ENCODE measurements at regions of chr2 and their contacts with region 1.

Region 1: GRCh38 chr2:231482806-231483391 is 18.6 kb upstream of the NCL start:
- DNase-seq: peak; percentile 47 to 96 (median 74)

Region 2: DNA sequence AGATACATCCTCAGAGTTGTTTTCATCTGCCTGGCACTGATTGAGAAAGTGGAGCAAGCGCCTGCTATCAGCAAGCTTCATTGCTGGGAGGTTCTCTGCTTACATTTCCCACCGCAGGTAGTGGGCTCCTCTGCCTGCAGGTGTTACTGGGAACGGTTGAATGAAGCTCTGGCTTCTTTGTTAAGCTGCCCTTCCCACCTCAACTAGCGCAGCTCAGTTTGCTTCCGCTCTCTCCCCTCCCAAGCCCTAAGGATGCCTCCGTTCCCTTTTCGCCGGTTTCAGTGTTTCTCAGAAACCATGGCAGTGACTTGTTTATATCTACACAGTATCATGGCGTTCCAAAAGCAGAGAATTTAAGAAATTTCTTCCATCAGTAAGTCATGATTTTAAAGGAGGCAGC is 159.6 kb before region 1 on chr2:
- intact Hi-C with region 1: no loop called
- DNase-seq: no peak

Region 3: DNA sequence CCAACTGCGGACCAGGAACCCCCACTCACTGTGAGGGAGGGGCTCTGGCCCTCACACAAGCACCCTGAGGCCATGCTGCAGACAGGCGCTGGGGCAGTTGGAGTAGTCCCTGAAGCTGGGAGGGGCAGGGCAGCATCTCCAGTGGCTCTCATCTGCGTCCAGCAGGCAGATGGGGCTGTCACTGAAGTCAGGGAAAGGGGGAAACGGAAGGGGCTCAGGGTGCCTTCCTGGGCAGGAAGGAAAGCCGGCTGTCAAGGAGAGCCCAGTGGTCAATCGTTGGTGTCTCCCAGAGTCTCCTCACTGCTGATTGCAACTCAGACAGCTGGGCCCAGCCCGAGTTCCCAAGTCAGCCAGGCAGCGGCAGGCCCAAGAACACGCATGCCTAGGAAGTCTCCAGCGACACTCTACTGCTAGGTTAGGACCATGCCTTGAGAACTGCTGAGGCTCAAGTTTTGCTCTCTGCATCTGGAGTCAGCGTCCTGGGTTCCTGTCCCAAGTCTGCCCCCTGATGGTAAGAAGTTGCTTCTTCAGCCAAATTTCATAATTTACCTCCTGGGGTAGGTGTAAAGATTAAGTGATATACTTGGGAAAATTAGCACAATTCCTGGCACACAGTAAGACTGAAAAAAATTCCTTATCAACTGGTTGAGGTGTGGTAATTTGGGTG is 74.8 kb after region 1 on chr2:
- intact Hi-C with region 1: loop called (anchors 1 kb)
- DNase-seq: peak in 8 of 10 donors; percentile 24 to 89 (median 42)